Endothelial cell of umbilical vein (primary cell): ENCODE measurements at regions of chr1 and their contacts with region 1.

Region 1: DNA sequence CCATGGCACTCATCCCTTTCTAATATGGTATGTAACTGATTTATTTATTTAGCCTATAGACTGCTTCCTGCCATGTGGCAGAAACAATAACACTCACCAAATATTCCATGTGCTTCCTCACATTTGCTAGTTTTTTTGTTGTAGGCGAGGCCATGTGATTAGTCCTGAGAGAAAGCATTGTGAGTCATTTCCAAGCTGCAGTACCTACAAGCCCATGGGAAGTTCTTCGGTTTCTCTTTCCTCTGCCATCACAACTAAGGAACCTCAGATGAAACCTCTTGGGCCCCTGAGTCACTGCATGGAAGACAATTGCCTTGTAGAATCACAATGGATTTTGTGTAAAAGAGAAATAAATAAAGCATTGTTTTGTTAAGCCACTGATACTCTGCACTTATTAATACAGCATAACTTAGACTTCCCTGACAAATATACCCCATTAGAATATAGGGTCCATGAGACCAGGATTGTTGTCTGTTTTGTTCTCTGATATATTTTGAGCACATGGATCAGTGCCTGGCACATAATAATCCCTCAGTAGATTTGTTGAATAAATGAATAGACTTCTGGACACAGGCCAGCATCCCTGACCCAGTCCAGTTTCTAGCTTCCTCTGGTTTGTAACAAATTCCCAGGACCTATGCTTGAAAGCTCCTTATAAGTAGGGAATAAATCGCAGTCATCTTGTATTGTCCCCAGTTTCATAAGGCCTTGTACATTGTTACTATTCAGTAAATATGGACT is 58.3 kb upstream of the GADD45A start:
- DNase-seq: peak; percentile 99
- H3K4me3 ChIP-seq: no peak overlapping the region
- H3K27ac ChIP-seq: peak overlapping the region; percentile 98
- H3K4me1 ChIP-seq: peaks cover 56% of the 10 kb centered on the region
- H3K27me3 ChIP-seq: no peaks in the 10 kb centered on the region
- CTCF ChIP-seq: no peak
- POLR2A ChIP-seq: peak; percentile 14

Region 2: DNA sequence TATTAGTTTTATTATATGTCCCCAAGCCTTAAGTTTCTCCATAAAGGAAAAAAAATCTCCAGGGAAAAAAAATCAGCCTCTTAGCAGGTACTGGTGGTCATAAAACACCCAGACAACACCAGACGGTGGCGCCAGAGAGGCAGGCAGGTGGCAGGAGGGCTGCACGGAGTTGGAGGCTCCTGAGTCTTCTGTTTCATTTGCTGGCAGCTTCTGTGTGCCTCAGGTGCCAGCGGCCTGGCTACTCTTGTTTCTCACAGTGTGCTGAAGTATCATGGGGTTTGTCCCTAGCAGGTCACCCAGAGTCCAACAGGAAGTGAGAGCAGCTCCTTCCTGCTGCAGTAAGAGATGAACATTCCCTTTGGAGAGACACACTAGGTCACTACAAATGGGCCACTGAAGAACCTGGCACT is 65.0 kb before region 1 on chr1:
- CTCF ChIA-PET with region 1: interaction called, 3 read pairs
- POLR2A ChIA-PET with region 1: no interaction called
- dilution Hi-C with region 1: no loop called
- intact Hi-C with region 1: loop called (anchors 1 kb)
- DNase-seq: peak; percentile 92
- H3K4me3 ChIP-seq: no peak overlapping the region
- H3K27ac ChIP-seq: no peak overlapping the region
- H3K4me1 ChIP-seq: peaks cover 11% of the 10 kb centered on the region
- H3K27me3 ChIP-seq: no peaks in the 10 kb centered on the region
- CTCF ChIP-seq: peak; percentile 85
- POLR2A ChIP-seq: no peak

Region 3: GRCh38 chr1:67612788-67613241 is 13.8 kb before region 1 on chr1:
- CTCF ChIA-PET with region 1: no interaction called
- POLR2A ChIA-PET with region 1: no interaction called
- dilution Hi-C with region 1: no loop called
- intact Hi-C with region 1: loop called (anchors 1 kb)
- DNase-seq: peak; percentile 50
- H3K4me3 ChIP-seq: no peak overlapping the region
- H3K27ac ChIP-seq: no peak overlapping the region
- H3K4me1 ChIP-seq: peaks cover 16% of the 10 kb centered on the region
- H3K27me3 ChIP-seq: no peaks in the 10 kb centered on the region
- CTCF ChIP-seq: no peak
- POLR2A ChIP-seq: no peak

Region 4: DNA sequence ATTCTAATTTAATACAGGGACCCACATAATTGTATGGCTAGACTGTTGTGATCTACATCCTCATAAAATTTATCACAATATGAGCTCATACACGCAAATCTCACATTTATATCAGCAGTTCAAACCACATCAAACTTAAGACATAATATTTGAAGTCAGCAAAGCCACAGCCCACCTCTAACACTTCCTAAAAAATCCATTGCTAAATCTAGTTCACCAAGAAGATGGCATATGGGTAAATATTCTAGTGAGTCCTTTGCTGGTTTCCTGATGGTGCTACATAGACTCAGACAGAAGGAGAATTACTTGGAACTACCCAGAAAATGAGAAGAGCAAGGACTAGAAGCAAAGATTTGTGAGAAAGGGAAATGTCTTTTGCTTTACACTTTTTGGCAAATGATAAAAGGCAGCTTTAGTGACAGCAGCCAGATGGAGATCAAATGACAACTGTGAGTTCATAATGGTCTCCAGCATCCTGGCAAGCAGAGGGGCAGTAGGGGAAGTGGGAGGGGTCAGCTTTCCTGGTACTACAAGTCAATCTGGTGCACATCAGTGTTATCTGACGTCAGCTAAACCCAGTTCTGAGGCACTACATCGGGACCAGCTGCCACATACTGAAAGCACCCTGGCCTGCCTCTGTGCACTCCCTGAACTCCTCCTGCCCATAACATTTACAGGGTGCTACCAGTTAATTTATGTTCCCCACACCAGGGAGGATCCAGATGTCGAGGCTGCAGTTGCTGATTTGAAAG is 47.8 kb after region 1 on chr1:
- CTCF ChIA-PET with region 1: interaction called, 5 read pairs
- POLR2A ChIA-PET with region 1: interaction called, 3 read pairs
- dilution Hi-C with region 1: no loop called
- intact Hi-C with region 1: loop called (anchors 1 kb)
- DNase-seq: peak; percentile 96
- H3K4me3 ChIP-seq: no peak overlapping the region
- H3K27ac ChIP-seq: peak overlapping the region; percentile 69
- H3K4me1 ChIP-seq: peaks cover 18% of the 10 kb centered on the region
- H3K27me3 ChIP-seq: no peaks in the 10 kb centered on the region
- CTCF ChIP-seq: no peak
- POLR2A ChIP-seq: no peak

Region 5: GRCh38 chr1:67713057-67713846 is 86.6 kb after region 1 on chr1:
- CTCF ChIA-PET with region 1: no interaction called
- POLR2A ChIA-PET with region 1: no interaction called
- dilution Hi-C with region 1: no loop called
- intact Hi-C with region 1: no loop called
- DNase-seq: peak; percentile 92
- H3K4me3 ChIP-seq: no peak overlapping the region
- H3K27ac ChIP-seq: peak overlapping the region; percentile 64
- H3K4me1 ChIP-seq: peaks cover 45% of the 10 kb centered on the region
- H3K27me3 ChIP-seq: no peaks in the 10 kb centered on the region
- CTCF ChIP-seq: no peak
- POLR2A ChIP-seq: no peak

Region 6: GRCh38 chr1:67832737-67833601 is 206.3 kb after region 1 on chr1 and contains the start of gene GNG12:
- CTCF ChIA-PET with region 1: no interaction called
- POLR2A ChIA-PET with region 1: no interaction called
- dilution Hi-C with region 1: no loop called
- intact Hi-C with region 1: loop called (anchors 5 kb)
- DNase-seq: peak; percentile 83
- H3K4me3 ChIP-seq: peak within 1 kb of the TSS; percentile 55 to 86 (median 55)
- H3K27ac ChIP-seq: peak within 1 kb of the TSS; percentile 90
- H3K4me1 ChIP-seq: peaks cover 29% of the 10 kb centered on the region
- H3K27me3 ChIP-seq: no peaks in the 10 kb centered on the region
- CTCF ChIP-seq: no peak
- POLR2A ChIP-seq: peak; percentile 85
- total RNA-seq, gene GNG12: 145 and 152 TPM in 2 replicates